Dendritic cell treated with granulocyte-macrophage colony-stimulating factor and Interleukin-4, amounts not matched to agents 40 ng/mL and 50 ng/mL, for 4 days (primary cell): ENCODE measurements at regions of chr11 and their contacts with region 1.

Region 1: GRCh38 chr11:45846974-45847910 is at the start of gene CRY2:
- H3K4me3 Mint-ChIP-seq: peak within 1 kb of the TSS; percentile 84
- H3K27ac Mint-ChIP-seq: peak within 1 kb of the TSS; percentile 93
- H3K4me1 Mint-ChIP-seq: peaks cover 67% of the 10 kb centered on the region
- H3K27me3 Mint-ChIP-seq: peaks cover 7% of the 10 kb centered on the region

Region 2: DNA sequence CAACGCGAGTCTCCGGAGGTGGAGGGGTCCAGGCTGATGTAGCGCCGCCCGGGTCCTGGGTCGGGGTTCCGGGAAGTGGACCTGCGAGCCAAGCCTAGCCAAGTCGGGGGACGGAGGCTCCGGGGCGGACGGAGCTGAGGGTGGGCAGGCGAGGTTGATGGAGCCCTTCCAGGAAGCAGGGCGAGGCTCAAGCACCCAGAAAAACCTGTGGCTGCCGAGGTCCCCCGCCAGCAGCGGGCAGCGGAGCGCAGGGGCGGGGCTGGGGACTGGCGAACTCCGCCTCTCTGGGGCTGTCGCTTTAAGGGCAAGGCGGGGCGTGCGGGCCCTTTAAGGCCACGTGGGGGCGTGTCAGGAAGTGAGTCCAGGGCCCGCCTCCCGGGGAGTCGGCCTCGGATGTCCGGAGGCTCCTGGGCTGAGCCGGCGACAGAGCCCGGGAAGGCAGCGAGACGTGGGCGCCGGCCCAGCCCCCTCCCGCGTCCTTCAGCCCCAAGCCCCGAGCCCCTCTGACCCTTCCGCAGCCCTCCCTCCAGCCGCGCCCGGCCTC is 42.4 kb before region 1 on chr11 and contains the start of gene SLC35C1:
- intact Hi-C with region 1: loop called (anchors 1 kb)
- H3K4me3 Mint-ChIP-seq: peak within 1 kb of the TSS; percentile 90
- H3K27ac Mint-ChIP-seq: peak within 1 kb of the TSS; percentile 97
- H3K4me1 Mint-ChIP-seq: peaks cover 52% of the 10 kb centered on the region
- H3K27me3 Mint-ChIP-seq: peaks cover 3% of the 10 kb centered on the region

Region 3: DNA sequence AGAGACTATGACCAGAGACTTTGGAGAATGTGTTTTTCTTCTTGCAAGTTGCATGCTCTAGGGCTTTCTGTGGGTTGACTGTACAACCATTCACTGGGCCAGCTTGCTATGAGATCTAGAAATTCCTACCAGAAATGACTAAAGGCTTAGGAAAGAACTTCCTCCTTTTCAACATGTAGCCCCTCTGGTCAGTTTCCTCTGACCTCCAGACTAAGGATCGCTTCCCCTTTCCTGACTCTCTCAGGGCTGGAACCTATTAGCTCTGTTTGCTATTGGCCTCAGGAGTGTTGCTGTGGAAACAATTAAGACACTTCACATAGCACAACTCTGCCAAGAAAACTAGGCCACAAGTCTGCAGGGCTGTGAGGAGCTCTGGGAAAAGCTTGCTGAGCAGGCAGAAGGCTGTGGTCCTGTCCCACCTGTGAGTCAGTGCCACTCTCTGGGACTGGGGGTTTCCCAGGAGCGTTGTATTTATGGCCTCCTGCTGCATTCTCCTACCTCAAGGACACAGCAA is 10.8 kb after region 1 on chr11:
- intact Hi-C with region 1: loop called (anchors 1 kb)
- H3K4me3 Mint-ChIP-seq: peak overlapping the region; percentile 22
- H3K27ac Mint-ChIP-seq: peak overlapping the region; percentile 91
- H3K4me1 Mint-ChIP-seq: peaks cover 39% of the 10 kb centered on the region
- H3K27me3 Mint-ChIP-seq: no peaks in the 10 kb centered on the region

Region 4: GRCh38 chr11:45917623-45918330 is 70.5 kb after region 1 on chr11 and contains the start of gene PEX16:
- intact Hi-C with region 1: loop called (anchors 1 kb)
- H3K4me3 Mint-ChIP-seq: peak within 1 kb of the TSS; percentile 95
- H3K27ac Mint-ChIP-seq: peak within 1 kb of the TSS; percentile 98
- H3K4me1 Mint-ChIP-seq: peaks cover 23% of the 10 kb centered on the region
- H3K27me3 Mint-ChIP-seq: peaks cover 21% of the 10 kb centered on the region

Region 5: GRCh38 chr11:46006418-46007070 is 159.3 kb after region 1 on chr11:
- intact Hi-C with region 1: loop called (anchors 10 kb)
- H3K4me3 Mint-ChIP-seq: no peak overlapping the region
- H3K27ac Mint-ChIP-seq: no peak overlapping the region
- H3K4me1 Mint-ChIP-seq: peaks cover 6% of the 10 kb centered on the region
- H3K27me3 Mint-ChIP-seq: no peaks in the 10 kb centered on the region

Region 6: GRCh38 chr11:46121724-46122477 is 274.7 kb after region 1 on chr11:
- intact Hi-C with region 1: loop called (anchors 10 kb)
- H3K4me3 Mint-ChIP-seq: peak overlapping the region; percentile 83
- H3K27ac Mint-ChIP-seq: peak overlapping the region; percentile 96
- H3K4me1 Mint-ChIP-seq: peaks cover 30% of the 10 kb centered on the region
- H3K27me3 Mint-ChIP-seq: no peaks in the 10 kb centered on the region